ENCODE measurements at regions of chr12 and their contacts with region 1.

Region 1: DNA sequence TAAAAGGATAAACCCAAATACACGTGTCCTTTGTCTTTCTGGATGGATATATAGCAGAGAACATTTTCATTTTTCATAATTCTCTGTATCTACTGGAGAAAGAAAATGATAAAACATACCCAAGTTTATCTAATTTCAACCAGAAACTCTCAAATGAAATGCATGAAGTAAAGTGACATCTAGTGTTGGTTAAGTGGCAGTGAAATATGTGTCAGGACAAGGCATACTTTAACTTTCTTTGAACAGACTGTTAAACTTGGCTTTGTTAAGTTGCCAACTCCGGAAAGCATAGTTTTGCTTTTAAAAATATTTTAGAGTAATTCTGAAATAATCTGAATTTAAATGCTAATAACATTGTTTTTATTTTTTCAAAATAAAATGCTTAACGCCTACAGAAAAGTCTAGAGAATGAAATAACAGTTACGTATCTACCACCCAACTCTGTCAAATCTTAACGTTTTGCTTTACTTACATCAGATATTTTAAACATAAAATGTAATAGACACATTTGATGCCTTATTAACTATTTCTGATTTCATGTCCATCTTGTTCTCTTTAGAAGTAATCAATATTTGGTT is 25.2 kb upstream of the NTN4 start:
- DNase-seq: no peak
- H3K4me3 ChIP-seq: no peak overlapping the region
- CTCF ChIP-seq: peak in 1 of 3 donors; percentile 15
- POLR2A ChIP-seq: no peak

Region 2: GRCh38 chr12:95623585-95624042 is 192.1 kb before region 1 on chr12:
- intact Hi-C with region 1: loop called (anchors 10 kb)
- DNase-seq: peak; percentile 50 to 90
- H3K4me3 ChIP-seq: no peak overlapping the region
- CTCF ChIP-seq: no peak
- POLR2A ChIP-seq: no peak

Region 3: GRCh38 chr12:95774311-95775045 is 41.2 kb before region 1 on chr12:
- intact Hi-C with region 1: no loop called
- DNase-seq: no peak
- H3K4me3 ChIP-seq: no peak overlapping the region
- CTCF ChIP-seq: no peak
- POLR2A ChIP-seq: no peak

Region 4: DNA sequence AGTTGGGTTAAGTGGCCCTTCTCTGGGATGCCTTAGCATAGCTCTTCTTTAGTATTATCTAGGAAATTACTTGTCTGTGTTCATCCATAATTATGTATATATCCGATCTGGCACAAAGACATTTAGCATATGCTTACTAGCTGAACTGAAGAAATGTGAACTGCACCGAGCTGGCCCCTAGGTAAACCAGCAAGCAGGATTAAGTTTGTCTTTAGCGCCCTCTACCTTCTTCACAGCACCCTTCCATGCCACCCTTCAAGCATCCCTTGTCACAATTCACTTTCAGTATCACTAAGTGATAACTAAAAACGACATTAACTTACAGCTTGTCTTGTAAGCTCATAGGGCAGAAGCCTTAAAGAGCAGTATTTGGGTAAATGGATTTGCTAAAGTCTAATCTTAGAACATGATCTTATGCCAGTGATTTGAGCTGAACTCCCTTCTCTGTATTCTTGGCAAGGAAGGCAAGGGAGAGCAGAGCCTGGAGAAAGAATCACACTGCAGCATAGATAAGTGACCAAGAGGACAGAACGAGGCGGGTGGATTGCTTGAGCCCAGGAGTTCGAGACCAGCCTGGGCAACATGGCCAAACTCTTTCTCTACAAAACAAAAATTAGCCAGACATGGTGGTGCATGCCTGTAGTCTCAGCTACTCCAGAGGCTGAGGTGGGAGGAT is 183.0 kb after region 1 on chr12:
- intact Hi-C with region 1: loop called (anchors 5 kb)
- DNase-seq: no peak
- H3K4me3 ChIP-seq: no peak overlapping the region
- CTCF ChIP-seq: no peak
- POLR2A ChIP-seq: no peak

Region 5: GRCh38 chr12:96889273-96889933 is 1073.7 kb after region 1 on chr12:
- intact Hi-C with region 1: no loop called
- DNase-seq: no peak
- H3K4me3 ChIP-seq: no peak overlapping the region
- CTCF ChIP-seq: no peak
- POLR2A ChIP-seq: no peak